AG04450 (cell line): ENCODE measurements at regions of chr1 and their contacts with region 1.

Region 1: GRCh38 chr1:235415008-235415904 is 48.0 kb downstream of the TBCE start:
- DNase-seq: peak; percentile 57
- H3K4me3 ChIP-seq: no peak overlapping the region
- H3K27ac ChIP-seq: no peak overlapping the region
- H3K27me3 ChIP-seq: no peaks in the 10 kb centered on the region
- CTCF ChIP-seq: peak; percentile 78

Region 2: DNA sequence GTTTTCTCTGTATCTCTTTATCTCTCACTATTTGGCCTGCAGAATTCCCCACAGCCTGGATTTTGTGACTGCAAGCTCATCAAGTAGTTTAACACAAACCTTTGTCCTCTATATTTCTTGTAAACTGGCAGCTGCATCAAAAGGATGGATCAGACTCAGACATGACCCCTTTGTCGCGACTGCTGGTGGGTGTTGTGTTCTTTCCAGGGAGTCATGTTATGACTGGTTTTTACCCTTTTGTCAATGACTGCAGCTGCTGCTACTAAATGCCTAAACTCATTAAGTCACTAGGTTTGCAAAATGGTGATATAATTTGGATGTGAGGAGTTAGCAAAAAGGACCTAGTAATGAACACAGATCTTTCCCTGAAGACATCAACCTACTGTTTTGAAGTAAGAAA is 276.4 kb before region 1 on chr1:
- CTCF ChIA-PET with region 1: interaction called, 11 read pairs
- POLR2A ChIA-PET with region 1: no interaction called
- DNase-seq: no peak
- H3K4me3 ChIP-seq: no peak overlapping the region
- H3K27ac ChIP-seq: no peak overlapping the region
- H3K27me3 ChIP-seq: no peaks in the 10 kb centered on the region
- CTCF ChIP-seq: no peak

Region 3: DNA sequence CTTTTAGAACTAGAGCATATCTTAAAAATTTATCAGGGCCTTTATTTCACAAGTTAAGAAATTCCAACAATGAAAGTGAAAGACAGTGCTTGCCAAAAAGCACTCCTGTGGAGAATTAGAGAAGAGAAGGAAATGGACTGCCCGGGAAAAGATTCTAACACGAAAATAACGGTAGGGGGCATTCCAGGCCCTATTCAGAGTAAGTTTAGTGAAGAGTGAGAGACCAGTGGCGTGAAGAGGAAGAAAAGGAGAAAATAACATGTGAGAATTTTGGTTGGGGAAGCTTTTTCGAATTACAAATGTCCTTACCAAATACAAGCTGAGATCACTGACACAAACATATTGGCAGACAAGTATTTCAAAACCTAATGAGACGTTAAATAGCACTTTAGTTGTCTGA is 215.8 kb before region 1 on chr1:
- CTCF ChIA-PET with region 1: interaction called, 14 read pairs
- POLR2A ChIA-PET with region 1: no interaction called
- DNase-seq: no peak
- H3K4me3 ChIP-seq: no peak overlapping the region
- H3K27ac ChIP-seq: no peak overlapping the region
- H3K27me3 ChIP-seq: no peaks in the 10 kb centered on the region
- CTCF ChIP-seq: peak; percentile 52

Region 4: GRCh38 chr1:235246022-235246991 is 168.9 kb before region 1 on chr1:
- CTCF ChIA-PET with region 1: interaction called, 68 read pairs
- POLR2A ChIA-PET with region 1: interaction called, 4 read pairs
- DNase-seq: no peak
- H3K4me3 ChIP-seq: no peak overlapping the region
- H3K27ac ChIP-seq: no peak overlapping the region
- H3K27me3 ChIP-seq: no peaks in the 10 kb centered on the region
- CTCF ChIP-seq: no peak

Region 5: GRCh38 chr1:235270625-235271024 is 144.6 kb before region 1 on chr1:
- CTCF ChIA-PET with region 1: interaction called, 26 read pairs
- POLR2A ChIA-PET with region 1: no interaction called
- DNase-seq: no peak
- H3K4me3 ChIP-seq: no peak overlapping the region
- H3K27ac ChIP-seq: no peak overlapping the region
- H3K27me3 ChIP-seq: no peaks in the 10 kb centered on the region
- CTCF ChIP-seq: 0 out of 2 replicates have a peak, but pooled peaks have one; percentile 18

Region 6: DNA sequence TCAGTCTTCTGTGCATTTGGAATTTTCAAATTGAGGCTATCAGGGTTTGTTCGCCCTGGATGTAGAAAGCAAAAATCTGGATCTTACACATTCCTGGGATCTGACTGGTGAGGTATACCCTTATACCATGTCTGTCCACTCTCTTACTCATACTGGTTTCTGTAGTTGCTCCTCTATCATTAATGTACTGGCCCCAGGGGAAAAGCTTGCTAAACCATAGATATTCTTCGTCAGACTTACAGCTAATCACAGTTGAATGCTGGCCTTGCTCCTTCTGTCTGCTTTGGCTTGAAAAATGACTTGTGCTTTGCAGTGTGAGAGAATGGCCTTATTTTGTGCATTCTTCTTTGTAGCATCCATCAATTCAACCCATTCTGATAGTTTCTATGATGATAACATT is 17.5 kb before region 1 on chr1:
- CTCF ChIA-PET with region 1: interaction called, 35 read pairs
- POLR2A ChIA-PET with region 1: no interaction called
- DNase-seq: peak; percentile 51
- H3K4me3 ChIP-seq: no peak overlapping the region
- H3K27ac ChIP-seq: no peak overlapping the region
- H3K27me3 ChIP-seq: no peaks in the 10 kb centered on the region
- CTCF ChIP-seq: no peak

Region 7: GRCh38 chr1:235442788-235443429 is 27.7 kb after region 1 on chr1:
- CTCF ChIA-PET with region 1: interaction called, 10 read pairs
- POLR2A ChIA-PET with region 1: no interaction called
- DNase-seq: peak; percentile 46
- H3K4me3 ChIP-seq: no peak overlapping the region
- H3K27ac ChIP-seq: peak overlapping the region; percentile 85
- H3K27me3 ChIP-seq: no peaks in the 10 kb centered on the region
- CTCF ChIP-seq: no peak

Region 8: DNA sequence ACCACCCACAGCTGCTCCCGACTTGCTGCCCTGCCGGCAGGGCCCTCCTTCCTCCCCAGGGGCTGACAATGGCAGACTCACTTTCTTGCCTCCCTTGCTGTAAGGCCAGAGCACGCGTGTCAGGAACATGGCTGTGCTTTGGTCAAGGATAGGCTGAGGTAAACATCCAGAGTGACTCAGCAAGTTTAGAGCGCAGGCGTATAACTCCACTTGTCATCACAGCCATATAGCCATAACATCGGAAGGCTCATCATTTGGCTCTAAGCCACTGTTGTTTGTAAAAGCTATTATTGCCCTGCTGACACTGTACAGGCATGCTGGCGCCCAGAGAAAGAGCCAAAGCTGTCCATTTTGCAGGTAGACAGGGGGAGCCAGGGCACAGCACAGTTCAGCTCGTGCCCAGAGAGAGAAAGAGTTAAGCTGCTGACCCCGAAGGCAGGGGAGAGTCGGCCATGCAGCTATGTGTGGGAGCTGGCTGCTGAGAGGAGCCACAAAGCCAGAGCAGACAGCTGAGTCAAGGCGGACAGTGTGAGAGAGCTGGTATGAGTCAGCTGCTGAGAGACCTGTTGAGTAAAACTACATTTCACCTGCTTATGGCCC is 173.8 kb after region 1 on chr1:
- CTCF ChIA-PET with region 1: no interaction called
- POLR2A ChIA-PET with region 1: no interaction called
- DNase-seq: no peak
- H3K4me3 ChIP-seq: no peak overlapping the region
- H3K27ac ChIP-seq: no peak overlapping the region
- H3K27me3 ChIP-seq: peaks cover 9% of the 10 kb centered on the region
- CTCF ChIP-seq: no peak